IMR-90 (cell line): ENCODE measurements at regions of chr6 and their contacts with region 1.

Region 1: GRCh38 chr6:35427851-35428321 is 24.3 kb upstream of the FANCE start:
- DNase-seq: peak; percentile 92
- ATAC-seq: peak; percentile 84
- H3K4me3 ChIP-seq: no peak overlapping the region
- H3K27ac ChIP-seq: peak overlapping the region; percentile 98
- H3K4me1 ChIP-seq: peaks cover 42% of the 10 kb centered on the region
- H3K27me3 ChIP-seq: no peaks in the 10 kb centered on the region
- CTCF ChIP-seq: no peak
- POLR2A ChIP-seq: no peak
- RAD21 ChIP-seq: no peak

Region 2: GRCh38 chr6:35247642-35248231 is 180.1 kb before region 1 on chr6:
- CTCF ChIA-PET with region 1: no interaction called
- POLR2A ChIA-PET with region 1: no interaction called
- dilution Hi-C with region 1: no loop called
- in situ Hi-C with region 1: no loop called
- intact Hi-C with region 1: no loop called
- DNase-seq: no peak
- ATAC-seq: peak; percentile 41
- H3K4me3 ChIP-seq: no peak overlapping the region
- H3K27ac ChIP-seq: no peak overlapping the region
- H3K4me1 ChIP-seq: peaks cover 2% of the 10 kb centered on the region; the same call in 1 of the 2 replicates
- H3K27me3 ChIP-seq: no peaks in the 10 kb centered on the region
- CTCF ChIP-seq: no peak
- POLR2A ChIP-seq: no peak
- RAD21 ChIP-seq: no peak

Region 3: DNA sequence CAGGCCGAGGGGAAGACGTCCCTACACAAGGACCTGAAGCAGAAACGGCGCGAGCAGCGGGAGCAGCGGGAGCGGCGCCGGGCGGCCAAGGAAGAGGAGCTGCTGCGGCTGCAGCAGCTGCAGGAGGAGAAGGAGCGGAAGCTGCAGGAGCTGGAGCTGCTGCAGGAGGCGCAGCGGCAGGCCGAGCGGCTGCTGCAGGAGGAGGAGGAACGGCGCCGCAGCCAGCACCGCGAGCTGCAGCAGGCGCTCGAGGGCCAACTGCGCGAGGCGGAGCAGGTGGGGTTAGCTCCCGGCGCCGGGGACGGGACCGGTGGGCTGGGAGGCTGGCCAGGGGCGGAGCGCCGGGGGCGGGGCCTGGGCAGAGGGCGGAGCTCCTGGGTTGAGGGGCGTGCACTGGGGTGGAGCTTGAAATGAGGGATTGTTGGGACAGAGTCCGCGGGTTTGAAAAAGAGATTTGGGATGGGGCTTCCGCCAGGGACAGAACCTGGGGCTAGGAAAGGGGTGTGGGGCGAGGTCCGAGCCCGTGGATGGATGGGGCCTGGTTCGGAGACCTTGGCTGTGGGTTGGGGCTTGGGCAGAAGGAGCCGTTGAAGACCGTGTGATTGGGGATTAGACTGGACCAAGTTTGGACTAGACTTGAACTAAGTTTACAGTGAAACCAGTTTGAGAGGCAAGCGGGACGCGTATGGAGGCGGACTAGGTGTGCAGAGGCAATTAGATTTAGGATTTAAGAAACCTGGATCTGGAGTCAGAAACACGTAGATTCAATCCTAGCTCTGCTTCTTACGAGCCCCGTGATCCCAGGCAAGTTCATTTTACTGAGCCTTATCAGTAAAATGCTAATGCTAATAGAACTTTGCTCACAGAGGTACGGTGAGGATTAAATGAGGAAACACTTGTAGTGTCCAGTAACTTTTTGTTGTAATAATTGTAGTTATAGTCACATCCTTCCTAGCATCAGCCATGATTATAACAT is 109.4 kb before region 1 on chr6:
- CTCF ChIA-PET with region 1: no interaction called
- POLR2A ChIA-PET with region 1: interaction called, 10 read pairs
- dilution Hi-C with region 1: no loop called
- in situ Hi-C with region 1: no loop called
- intact Hi-C with region 1: no loop called
- DNase-seq: peak; percentile 72
- ATAC-seq: peak; percentile 100
- H3K4me3 ChIP-seq: peak overlapping the region; percentile 35
- H3K27ac ChIP-seq: no peak overlapping the region; the same call in 1 of the 2 replicates
- H3K4me1 ChIP-seq: peaks cover 2% of the 10 kb centered on the region; the same call in 1 of the 2 replicates
- H3K27me3 ChIP-seq: peaks cover 9% of the 10 kb centered on the region
- CTCF ChIP-seq: 0 out of 2 replicates have a peak, but pooled peaks have one; percentile 12
- POLR2A ChIP-seq: no peak
- RAD21 ChIP-seq: 0 out of 2 replicates have a peak, but pooled peaks have one; percentile 4